Adrenal gland (tissue), 19 donors: ENCODE measurements at regions of chr1 and their contacts with region 1.

Region 1: GRCh38 chr1:9874959-9875635 is 35.0 kb downstream of the CTNNBIP1 start:
- DNase-seq: peak; percentile 52 to 83 (median 70)
- H3K4me3 ChIP-seq: peak overlapping the region in 1 of 4 donors; percentile 22
- H3K27ac ChIP-seq: no peak overlapping the region
- H3K4me1 ChIP-seq: peaks cover 0 to 10% of the 10 kb centered on the region in 2 donors
- H3K27me3 ChIP-seq: no peaks in the 10 kb centered on the region
- CTCF ChIP-seq: peak; percentile 84 to 96 (median 91)
- POLR2A ChIP-seq: no peak

Region 2: DNA sequence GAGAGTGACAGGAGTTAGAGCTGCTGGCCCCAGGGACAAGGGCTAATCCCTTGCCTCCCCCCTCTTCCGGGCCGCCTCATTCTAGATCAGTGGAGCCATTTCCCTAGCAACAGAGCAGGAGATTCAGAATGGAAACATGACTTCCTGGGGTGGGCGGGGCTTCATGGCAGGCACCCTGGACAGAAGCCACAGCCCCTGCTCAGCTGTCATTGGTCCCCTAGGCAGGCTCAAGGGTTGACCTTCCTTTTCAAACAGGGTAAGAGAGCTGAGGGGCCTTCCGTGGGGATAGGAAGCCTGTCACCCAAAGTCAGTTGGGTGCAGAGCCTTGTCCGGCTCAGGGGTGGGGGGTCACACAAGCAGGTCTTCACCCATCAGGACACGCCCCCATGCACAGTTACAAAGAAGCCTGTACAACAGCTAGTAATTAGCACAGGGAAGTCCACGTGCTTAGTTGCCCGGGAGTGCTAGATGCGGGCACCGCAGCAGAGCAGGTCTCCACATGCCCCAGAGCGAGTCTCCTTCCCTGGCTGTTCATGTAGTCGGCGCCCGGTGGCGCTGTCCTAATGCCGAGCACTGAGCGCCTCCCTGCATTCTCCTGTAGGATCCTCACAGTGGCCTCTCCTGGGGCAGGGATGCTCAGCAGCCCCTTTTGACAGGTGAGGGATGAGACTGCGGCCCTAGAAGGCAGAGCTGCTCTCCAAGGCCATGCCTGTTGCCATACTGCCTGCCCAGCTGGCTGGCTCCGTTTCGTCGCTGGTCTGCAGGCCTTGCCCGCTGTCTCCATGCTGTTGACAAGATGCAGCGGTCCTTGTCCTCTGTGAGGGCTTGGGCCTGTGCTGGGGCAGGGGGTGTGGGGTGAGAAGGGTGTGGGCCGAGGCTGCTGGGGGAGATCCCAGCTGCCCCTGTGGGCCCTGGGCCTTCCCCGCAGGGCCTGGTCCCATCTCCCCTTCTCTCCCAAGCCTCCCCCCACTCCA is 281.3 kb before region 1 on chr1:
- intact Hi-C with region 1: no loop called
- DNase-seq: peak; percentile 82 to 97 (median 92)
- H3K4me3 ChIP-seq: peak overlapping the region in 1 of 4 donors; percentile 19
- H3K27ac ChIP-seq: peak overlapping the region in 3 of 5 donors; percentile 5 to 76 (median 67)
- H3K4me1 ChIP-seq: peaks cover 20 to 25% of the 10 kb centered on the region in 2 donors
- H3K27me3 ChIP-seq: no peaks in the 10 kb centered on the region
- CTCF ChIP-seq: peak in 1 of 6 experiments; percentile 30
- POLR2A ChIP-seq: no peak

Region 3: DNA sequence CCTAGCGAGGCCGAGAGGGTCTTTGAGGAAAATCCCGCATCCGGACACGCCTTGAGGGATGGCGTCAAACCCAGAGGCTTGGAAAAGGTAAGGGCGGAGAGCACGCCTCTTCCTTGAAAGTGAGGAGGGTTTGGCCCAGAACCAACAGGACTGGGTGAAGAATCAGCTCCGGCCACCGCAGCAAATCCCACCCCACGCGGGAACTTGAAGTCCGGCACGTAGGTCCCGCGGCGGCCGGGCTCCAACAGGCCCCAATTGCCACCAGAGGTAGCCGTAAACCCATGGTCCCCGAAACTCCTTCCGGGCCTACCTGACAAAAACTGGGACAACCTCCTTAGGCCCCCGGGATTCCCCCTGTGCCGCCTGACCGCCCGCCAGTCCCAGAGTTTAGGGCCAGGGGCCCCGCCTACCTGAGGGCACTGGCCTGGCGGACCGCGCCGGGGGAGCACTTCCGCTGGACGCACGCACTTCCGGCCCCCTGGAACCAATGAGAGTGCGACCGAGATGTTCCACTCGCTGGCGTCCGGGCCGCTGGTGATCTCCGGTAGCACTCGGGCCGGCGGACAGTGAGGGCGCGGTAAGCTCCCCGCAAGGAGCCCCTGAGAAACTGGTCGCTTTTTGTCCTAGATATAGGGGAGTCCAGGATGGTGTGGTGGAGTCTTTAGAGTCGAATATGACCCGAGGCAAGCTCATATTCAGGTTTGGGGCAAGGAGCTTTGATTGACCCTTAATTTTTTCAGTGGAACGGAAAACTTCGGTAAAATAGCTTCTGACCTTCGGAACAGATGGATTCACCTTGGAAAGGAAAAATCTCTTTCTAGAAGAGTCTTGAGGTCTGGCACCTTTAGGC is 68.1 kb after region 1 on chr1 and contains the starts of genes LZIC and NMNAT1:
- intact Hi-C with region 1: loop called (anchors 10 kb)
- DNase-seq: peak; percentile 92 to 97 (median 94)
- H3K4me3 ChIP-seq: peak within 1 kb of the TSS; percentile 59 to 71 (median 64)
- H3K27ac ChIP-seq: peak within 1 kb of the TSS; percentile 63 to 92 (median 86)
- H3K4me1 ChIP-seq: peaks cover 4 to 21% of the 10 kb centered on the region in 2 donors
- H3K27me3 ChIP-seq: no peaks in the 10 kb centered on the region
- CTCF ChIP-seq: peak in 1 of 6 experiments; percentile 19
- POLR2A ChIP-seq: peak; percentile 89 to 96
- total RNA-seq, gene LZIC: 22.3 to 40.3 (median 30.6) TPM
- total RNA-seq, gene NMNAT1: 7.5 to 27.1 (median 13.3) TPM

Region 4: DNA sequence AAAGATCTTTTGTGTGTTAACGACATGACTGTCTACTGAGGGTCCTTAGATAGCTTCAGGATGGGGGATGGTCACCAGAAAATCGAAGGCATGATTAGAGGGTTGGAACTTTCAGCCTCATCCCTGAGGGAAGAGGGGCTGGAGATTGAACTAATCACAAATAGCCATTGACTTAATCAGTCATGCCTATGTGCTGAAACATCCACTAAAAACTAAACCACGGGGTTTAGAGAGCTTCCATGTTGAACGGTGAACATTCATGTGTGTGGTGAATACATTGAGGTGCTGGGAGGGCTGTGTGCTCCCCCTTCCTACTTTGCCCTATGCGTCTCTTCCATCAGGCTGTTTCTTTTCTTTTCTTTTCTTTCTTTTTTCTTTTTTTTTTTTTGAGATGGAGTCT is 138.9 kb after region 1 on chr1:
- intact Hi-C with region 1: loop called in 1 of 2 experiments (anchors 10 kb)
- DNase-seq: no peak
- H3K4me3 ChIP-seq: no peak overlapping the region
- H3K27ac ChIP-seq: no peak overlapping the region
- H3K4me1 ChIP-seq: peaks cover 3% of the 10 kb centered on the region in 2 donors
- H3K27me3 ChIP-seq: no peaks in the 10 kb centered on the region
- CTCF ChIP-seq: no peak
- POLR2A ChIP-seq: no peak